PC-3 (cell line): ENCODE measurements at regions of chr10 and their contacts with region 1.

Region 1: GRCh38 chr10:70272925-70273316 is 10.9 kb downstream of the NPFFR1 start:
- DNase-seq: peak; percentile 69
- ATAC-seq: peak; percentile 78
- H3K4me3 ChIP-seq: peak overlapping the region; percentile 32; the same call in 1 of the 2 replicates
- H3K27ac ChIP-seq: no peak overlapping the region
- H3K4me1 ChIP-seq: peaks cover 2% of the 10 kb centered on the region; the same call in 1 of the 2 replicates
- H3K27me3 ChIP-seq: no peaks in the 10 kb centered on the region
- CTCF ChIP-seq: peak; percentile 90

Region 2: DNA sequence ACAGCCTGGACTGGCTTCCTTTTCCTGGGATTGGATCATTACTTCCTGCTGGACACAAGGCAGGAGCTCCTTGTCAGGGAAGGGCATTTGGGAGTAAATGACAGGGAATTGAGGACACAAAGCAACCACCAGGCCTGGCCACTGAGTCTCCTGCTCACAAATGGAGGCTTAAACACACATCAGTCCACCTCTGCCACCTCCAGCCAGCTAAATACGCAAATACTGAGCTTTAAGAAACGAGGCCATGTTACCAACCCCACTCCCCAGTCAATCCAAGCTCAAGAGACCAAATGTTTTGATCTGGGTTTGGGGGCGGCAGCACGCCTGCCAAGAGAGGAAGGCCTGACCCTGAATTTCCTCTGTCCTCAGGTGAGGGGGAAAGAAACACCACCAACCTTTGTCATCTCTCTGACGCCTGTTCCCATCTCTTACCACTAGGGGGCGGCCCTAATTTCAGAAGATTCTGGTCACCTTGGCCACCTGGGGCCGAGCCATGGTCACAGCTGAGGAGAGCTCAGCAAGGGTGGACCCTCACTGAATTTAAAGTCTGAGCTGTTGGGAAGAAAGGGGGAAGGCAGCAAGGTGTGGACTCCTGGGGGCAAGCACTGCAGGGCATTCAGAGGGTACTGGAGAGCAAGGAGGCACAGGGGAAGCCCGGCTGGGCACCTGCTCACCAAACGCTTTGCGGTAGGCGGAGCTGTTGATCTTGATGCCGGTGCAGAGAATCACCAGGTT is 156.8 kb before region 1 on chr10:
- CTCF ChIA-PET with region 1: no interaction called
- POLR2A ChIA-PET with region 1: no interaction called
- intact Hi-C with region 1: no loop called
- DNase-seq: peak; percentile 86
- ATAC-seq: peak; percentile 85
- H3K4me3 ChIP-seq: no peak overlapping the region
- H3K27ac ChIP-seq: no peak overlapping the region
- H3K4me1 ChIP-seq: no peaks in the 10 kb centered on the region
- H3K27me3 ChIP-seq: no peaks in the 10 kb centered on the region
- CTCF ChIP-seq: peak; percentile 100

Region 3: DNA sequence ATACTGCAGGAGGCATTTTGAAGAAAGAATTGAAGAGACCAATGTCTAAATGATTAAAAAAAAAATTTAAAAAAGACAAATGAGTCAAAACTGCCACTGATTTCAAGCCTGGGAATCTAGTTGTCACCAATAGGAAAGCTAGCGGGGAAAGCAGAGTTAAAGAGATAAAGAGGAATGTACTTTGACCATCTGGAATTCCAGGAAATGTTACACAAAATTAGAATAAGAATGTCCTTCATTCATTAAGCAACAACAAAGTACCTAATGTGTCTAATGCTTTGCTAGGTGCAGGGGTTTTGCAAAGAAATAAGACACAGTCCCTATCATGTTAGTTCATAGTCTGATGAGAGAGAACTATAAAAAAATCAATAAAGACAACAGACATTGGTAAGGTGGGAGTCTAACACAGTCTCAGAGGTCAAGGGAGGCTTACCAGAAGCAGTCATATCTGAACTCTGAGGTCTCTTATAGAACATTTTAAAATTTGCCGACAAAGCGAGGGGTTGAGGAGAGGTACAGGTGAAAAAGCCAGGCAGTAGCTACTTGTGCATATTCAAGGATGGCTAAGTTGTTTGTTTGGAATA is 117.6 kb before region 1 on chr10:
- CTCF ChIA-PET with region 1: no interaction called
- POLR2A ChIA-PET with region 1: no interaction called
- intact Hi-C with region 1: no loop called
- DNase-seq: no peak
- ATAC-seq: no peak
- H3K4me3 ChIP-seq: no peak overlapping the region
- H3K27ac ChIP-seq: no peak overlapping the region
- H3K4me1 ChIP-seq: no peaks in the 10 kb centered on the region
- H3K27me3 ChIP-seq: no peaks in the 10 kb centered on the region
- CTCF ChIP-seq: no peak

Region 4: DNA sequence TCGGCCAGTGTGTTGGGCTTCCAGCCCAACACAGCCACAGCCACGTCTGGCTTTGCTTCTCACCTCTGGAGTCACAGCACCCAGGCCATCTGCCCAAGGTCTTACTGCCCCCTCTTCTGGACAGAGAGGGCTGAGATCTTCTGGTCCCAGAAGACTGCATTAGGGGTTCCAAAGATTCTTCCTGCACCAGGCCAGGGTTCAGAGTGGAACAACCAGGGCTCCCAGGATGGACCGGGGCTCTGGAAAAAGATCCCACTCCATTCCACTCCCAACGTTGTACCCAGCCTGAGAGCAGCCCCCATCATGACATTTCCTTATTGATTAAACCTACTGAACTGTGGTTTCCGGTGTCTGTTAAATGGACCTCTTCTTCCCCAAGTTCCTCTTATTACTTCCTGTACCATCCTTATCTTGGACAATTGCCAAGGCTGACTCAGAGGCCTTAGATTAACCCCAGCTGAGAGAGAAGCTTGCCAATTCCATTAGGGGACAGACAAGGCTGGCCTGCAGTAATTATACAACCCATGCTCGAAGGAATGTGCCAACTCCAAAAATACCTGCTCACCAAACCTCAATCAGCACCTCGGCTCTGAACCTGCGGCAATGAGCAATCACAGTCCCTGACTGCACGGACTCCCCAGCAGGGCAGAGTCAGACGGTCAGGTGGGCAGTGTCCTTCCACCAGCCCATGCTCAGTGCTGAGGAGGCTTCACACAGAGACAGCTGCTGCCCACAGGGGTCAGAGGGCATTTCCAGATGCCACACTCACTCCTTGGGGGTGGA is 58.8 kb after region 1 on chr10:
- CTCF ChIA-PET with region 1: interaction called, 3 read pairs
- POLR2A ChIA-PET with region 1: no interaction called
- intact Hi-C with region 1: loop called (anchors 5 kb)
- DNase-seq: peak; percentile 99
- ATAC-seq: peak; percentile 81
- H3K4me3 ChIP-seq: no peak overlapping the region
- H3K27ac ChIP-seq: 0 out of 2 replicates have a peak overlapping the region, but pooled peaks have one; percentile 1
- H3K4me1 ChIP-seq: peaks cover 22% of the 10 kb centered on the region
- H3K27me3 ChIP-seq: no peaks in the 10 kb centered on the region
- CTCF ChIP-seq: peak; percentile 57

Region 5: DNA sequence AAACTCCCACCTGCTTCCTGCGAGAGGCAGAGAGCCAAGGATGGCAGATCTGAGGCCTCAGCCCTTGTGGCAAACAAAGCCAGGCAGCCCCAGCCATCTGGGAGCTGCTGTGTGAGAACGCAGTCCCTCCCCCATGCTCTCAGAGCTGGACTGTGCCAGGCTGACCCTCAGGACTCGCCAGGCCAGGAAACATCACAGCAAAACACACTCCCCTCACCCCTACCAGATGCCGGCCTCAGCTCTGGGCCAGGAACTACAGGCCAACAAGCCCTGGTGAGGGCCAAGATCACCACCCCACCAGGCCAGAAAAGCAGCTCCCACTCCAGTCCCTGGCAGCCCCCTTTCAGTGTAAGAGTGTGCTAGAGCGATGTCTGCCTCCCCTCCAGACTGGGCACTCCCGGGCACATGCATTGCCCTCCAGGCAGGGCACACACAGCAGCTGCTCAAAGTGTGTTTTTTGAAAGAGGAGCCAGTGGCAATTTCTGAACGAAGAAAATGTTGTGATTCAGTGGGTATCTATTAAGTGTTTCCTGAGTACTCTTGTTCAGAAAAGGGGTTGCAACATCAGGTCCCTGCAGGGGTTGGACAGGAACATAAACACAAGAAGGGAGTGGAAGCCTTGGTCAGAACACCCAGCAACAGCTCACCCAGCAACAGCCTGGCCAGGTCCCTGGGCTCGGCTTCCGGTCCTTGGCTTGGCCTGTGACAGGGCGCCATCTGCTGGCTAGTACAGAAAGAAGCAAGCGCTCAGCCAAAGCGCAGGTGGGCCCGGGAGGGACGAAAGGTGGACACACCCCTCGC is 91.2 kb after region 1 on chr10:
- CTCF ChIA-PET with region 1: interaction called, 17 read pairs
- POLR2A ChIA-PET with region 1: interaction called, 3 read pairs
- intact Hi-C with region 1: loop called (anchors 1 kb)
- DNase-seq: peak; percentile 98
- ATAC-seq: peak; percentile 97
- H3K4me3 ChIP-seq: peak overlapping the region; percentile 36; the same call in 1 of the 2 replicates
- H3K27ac ChIP-seq: peak overlapping the region; percentile 14
- H3K4me1 ChIP-seq: peaks cover 14% of the 10 kb centered on the region
- H3K27me3 ChIP-seq: no peaks in the 10 kb centered on the region
- CTCF ChIP-seq: peak; percentile 100

Region 6: DNA sequence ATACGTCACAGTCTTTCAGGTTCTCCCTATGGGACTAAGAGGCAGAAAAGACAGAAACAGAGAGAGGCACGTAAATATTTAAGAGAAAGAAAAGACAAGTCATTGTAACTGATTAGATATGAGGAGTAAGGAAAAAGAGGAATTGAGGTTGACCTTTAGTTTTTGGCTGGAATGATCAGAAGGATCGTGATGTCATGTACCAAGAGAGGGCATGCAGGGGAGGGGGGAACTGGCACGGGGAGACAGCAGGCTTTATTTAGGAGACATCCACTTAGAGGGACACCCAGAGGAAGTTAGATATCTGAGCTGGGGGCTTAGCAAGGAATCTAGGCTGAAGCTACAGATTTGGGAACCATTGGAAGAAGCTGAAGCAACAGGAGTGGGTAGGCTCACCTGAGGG is 118.7 kb after region 1 on chr10:
- CTCF ChIA-PET with region 1: interaction called, 8 read pairs
- POLR2A ChIA-PET with region 1: no interaction called
- intact Hi-C with region 1: loop called (anchors 1 kb)
- DNase-seq: no peak
- ATAC-seq: no peak
- H3K4me3 ChIP-seq: no peak overlapping the region
- H3K27ac ChIP-seq: no peak overlapping the region
- H3K4me1 ChIP-seq: peaks cover 8% of the 10 kb centered on the region; the same call in 1 of the 2 replicates
- H3K27me3 ChIP-seq: no peaks in the 10 kb centered on the region
- CTCF ChIP-seq: no peak